ENCODE measurements at regions of chr21 and their contacts with region 1.

Region 1: DNA sequence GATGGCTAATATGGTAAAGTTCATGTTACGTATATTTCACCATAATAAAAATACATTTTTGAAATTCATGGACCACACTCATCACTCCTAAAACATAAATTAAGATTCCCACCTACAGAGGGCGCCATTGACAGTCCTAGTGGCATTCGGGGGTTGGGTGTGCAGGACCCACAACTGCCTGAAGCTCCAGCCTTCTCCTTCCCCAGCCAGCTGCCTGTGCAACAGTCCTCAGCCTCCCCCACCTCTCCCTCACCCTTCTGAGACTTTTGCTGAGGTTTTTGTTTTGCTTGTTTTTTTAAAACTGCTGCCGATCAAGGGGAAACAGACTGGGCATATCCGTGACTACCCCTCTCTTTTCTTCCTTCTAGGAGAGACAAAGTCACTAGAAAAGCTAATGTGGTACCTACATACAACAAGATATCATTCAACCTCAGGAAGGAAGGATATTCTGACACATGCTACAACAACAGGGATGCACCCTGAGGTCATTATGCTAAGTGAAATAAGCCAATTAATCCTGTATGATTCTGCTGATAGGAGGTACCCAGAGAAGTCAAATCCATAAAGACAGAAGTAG is 9.2 kb upstream of the EVA1C start:
- DNase-seq: no peak
- H3K4me3 ChIP-seq: no peak overlapping the region
- H3K27ac ChIP-seq: no peak overlapping the region
- H3K4me1 ChIP-seq: peaks cover 4 to 19% (median 11%) of the 10 kb centered on the region in 4 donors
- H3K27me3 ChIP-seq: no peaks in the 10 kb centered on the region
- CTCF ChIP-seq: peak; percentile 62 to 72 (median 69)
- EP300 ChIP-seq: no peak
- POLR2A ChIP-seq: no peak

Region 2: GRCh38 chr21:32569261-32570230 is 166.3 kb after region 1 on chr21:
- intact Hi-C with region 1: loop called (anchors 2 kb)
- DNase-seq: no peak
- H3K4me3 ChIP-seq: peak overlapping the region; percentile 57 to 65 (median 62)
- H3K27ac ChIP-seq: peak overlapping the region; percentile 76 to 89 (median 85)
- H3K4me1 ChIP-seq: peaks cover 5 to 17% (median 12%) of the 10 kb centered on the region in 4 donors
- H3K27me3 ChIP-seq: no peaks in the 10 kb centered on the region
- CTCF ChIP-seq: peak; percentile 75 to 84 (median 76)
- EP300 ChIP-seq: no peak
- POLR2A ChIP-seq: no peak

Region 3: GRCh38 chr21:32604464-32604863 is 201.2 kb after region 1 on chr21:
- intact Hi-C with region 1: loop called (anchors 5 kb)
- DNase-seq: no peak
- H3K4me3 ChIP-seq: no peak overlapping the region
- H3K27ac ChIP-seq: no peak overlapping the region
- H3K4me1 ChIP-seq: peaks cover 0 to 4% (median 0%) of the 10 kb centered on the region in 4 donors
- H3K27me3 ChIP-seq: no peaks in the 10 kb centered on the region
- CTCF ChIP-seq: no peak
- EP300 ChIP-seq: no peak
- POLR2A ChIP-seq: no peak

Measured in esophagus muscularis mucosa (tissue), 4 donors.